Esophagus squamous epithelium (tissue), 5 donors: ENCODE measurements at regions of chr17 and their contacts with region 1.

Region 1: DNA sequence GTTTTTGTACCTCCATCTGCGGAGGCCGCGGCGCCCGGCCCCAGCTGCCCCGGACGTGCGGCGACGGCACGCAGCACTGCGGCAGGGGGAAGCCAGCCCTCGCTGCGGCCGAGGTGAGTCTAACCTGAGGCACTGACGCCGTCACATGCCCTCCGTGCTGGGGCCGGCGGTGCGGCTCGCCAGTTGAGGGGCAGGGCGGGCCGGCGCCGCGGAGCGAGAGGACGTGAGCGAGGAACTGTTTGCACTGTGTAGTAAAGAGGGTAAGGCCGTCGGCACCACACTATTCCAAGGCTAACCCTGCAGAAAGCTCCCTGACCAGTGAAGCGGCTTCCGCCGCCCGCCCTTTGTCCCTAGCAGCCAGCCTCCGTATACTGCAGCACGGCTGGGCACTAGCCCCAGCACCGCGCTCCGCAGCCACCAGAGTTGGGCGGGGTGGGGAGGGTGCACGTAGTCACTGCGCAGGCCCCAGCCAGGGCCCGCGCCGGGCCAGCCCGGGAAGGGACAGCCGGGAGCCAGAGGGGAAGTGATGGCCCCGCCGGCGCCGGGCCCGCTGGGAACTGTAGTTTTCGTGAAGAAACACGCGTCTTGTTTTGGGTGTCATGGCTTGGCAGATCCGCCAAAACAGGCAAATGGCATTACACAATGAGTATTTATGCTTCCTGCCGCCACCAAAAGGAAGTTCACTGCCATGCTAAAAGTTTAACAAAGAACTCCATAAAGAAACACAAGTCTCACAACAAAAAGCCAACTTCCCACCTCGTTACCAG is 580 bp upstream of the KANSL1 start:
- DNase-seq: peak; percentile 89
- H3K4me3 ChIP-seq: peak overlapping the region; percentile 78 to 100 (median 90)
- H3K27ac ChIP-seq: peak overlapping the region; percentile 98 to 100 (median 100)
- H3K4me1 ChIP-seq: peaks cover 7 to 62% (median 28%) of the 10 kb centered on the region in 3 donors
- H3K27me3 ChIP-seq: no peaks in the 10 kb centered on the region
- CTCF ChIP-seq: peak in 2 of 6 experiments; percentile 41 to 42
- POLR2A ChIP-seq: peak in 3 of 4 donors; percentile 55 to 85 (median 69)

Region 2: DNA sequence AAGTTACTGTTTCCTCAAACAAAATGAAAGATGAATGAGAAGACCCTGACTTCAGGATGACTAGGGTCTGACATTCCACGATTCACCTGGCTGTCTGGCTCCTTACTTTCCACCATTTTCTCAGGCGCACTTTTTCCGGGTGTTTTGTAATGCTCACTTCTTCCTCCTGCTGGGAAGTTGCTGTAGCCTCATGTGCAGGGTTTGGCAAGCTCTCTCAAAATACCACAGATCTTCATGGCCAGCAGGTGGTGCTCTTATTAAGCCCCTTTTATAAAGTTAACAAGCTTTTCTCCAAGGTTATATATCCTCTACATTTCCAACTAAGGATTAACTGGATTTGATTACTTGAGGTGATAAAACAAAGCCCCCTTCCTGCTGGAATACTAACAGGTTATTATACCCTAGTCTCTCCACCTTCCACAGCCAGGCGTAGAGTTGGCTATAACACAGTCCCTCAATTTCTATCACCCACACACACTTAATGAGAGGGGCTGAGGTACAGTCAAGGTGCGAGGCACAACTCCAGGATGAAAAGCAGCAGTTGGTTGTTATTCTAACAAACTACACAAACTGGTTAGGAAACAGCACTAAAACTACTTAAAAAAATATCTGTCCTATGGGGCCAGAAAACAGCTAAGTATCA is 149.4 kb before region 1 on chr17:
- intact Hi-C with region 1: loop called (anchors 5 kb)
- DNase-seq: no peak
- H3K4me3 ChIP-seq: no peak overlapping the region
- H3K27ac ChIP-seq: peak overlapping the region; percentile 9 to 59 (median 52)
- H3K4me1 ChIP-seq: peaks cover 0 to 44% (median 13%) of the 10 kb centered on the region in 3 donors
- H3K27me3 ChIP-seq: no peaks in the 10 kb centered on the region
- CTCF ChIP-seq: peak; percentile 51 to 91 (median 90)
- POLR2A ChIP-seq: no peak

Region 3: GRCh38 chr17:46270032-46270431 is 76.2 kb after region 1 on chr17:
- intact Hi-C with region 1: loop called (anchors 10 kb)
- DNase-seq: no peak
- H3K4me3 ChIP-seq: no peak overlapping the region
- H3K27ac ChIP-seq: no peak overlapping the region
- H3K4me1 ChIP-seq: peaks cover 0 to 18% (median 4%) of the 10 kb centered on the region in 3 donors
- H3K27me3 ChIP-seq: no peaks in the 10 kb centered on the region
- CTCF ChIP-seq: no peak
- POLR2A ChIP-seq: no peak